HEK293T (cell line): ENCODE measurements at regions of chr10 and their contacts with region 1.

Region 1: GRCh38 chr10:103244663-103245271 is 920 bp upstream of the RPEL1 start:
- DNase-seq: peak; percentile 89

Region 2: GRCh38 chr10:103231047-103231551 is 13.7 kb before region 1 on chr10:
- CTCF ChIA-PET with region 1: interaction called, 11 read pairs
- POLR2A ChIA-PET with region 1: no interaction called
- DNase-seq: no peak